Mammary epithelial cell (primary cell): ENCODE measurements at regions of chr6 and their contacts with region 1.

Region 1: GRCh38 chr6:152267967-152268845 is 369.0 kb downstream of the SYNE1 start:
- DNase-seq: no peak
- H3K4me3 ChIP-seq: no peak overlapping the region
- H3K27ac ChIP-seq: no peak overlapping the region
- H3K4me1 ChIP-seq: peaks cover 32% of the 10 kb centered on the region
- H3K27me3 ChIP-seq: no peaks in the 10 kb centered on the region
- CTCF ChIP-seq: peak; percentile 26 to 54

Region 2: DNA sequence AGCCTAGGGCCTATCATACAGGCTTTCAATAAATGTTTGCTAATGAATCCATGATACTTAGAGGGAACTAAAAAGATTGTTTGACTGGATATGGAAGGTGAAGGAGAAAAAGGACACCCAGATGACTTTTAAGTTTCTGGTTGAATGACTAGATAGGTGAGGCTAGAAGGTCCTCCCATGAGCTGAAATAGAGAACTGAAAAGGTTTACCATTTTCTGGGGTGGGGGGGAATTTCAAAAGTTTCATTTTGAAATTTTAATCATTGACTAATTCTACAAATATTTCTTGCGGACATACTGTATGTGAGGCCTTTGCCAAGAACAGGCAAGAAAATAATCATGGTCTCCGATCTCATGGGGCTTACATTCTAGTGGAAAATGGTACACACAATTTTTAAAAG is 858.9 kb before region 1 on chr6:
- CTCF ChIA-PET with region 1: no interaction called
- dilution Hi-C with region 1: no loop called
- in situ Hi-C with region 1: loop called in 1 of 2 experiments (anchors 25 kb)
- intact Hi-C with region 1: no loop called
- DNase-seq: no peak
- H3K4me3 ChIP-seq: no peak overlapping the region
- H3K27ac ChIP-seq: no peak overlapping the region
- H3K4me1 ChIP-seq: no peaks in the 10 kb centered on the region
- H3K27me3 ChIP-seq: no peaks in the 10 kb centered on the region
- CTCF ChIP-seq: no peak

Region 3: DNA sequence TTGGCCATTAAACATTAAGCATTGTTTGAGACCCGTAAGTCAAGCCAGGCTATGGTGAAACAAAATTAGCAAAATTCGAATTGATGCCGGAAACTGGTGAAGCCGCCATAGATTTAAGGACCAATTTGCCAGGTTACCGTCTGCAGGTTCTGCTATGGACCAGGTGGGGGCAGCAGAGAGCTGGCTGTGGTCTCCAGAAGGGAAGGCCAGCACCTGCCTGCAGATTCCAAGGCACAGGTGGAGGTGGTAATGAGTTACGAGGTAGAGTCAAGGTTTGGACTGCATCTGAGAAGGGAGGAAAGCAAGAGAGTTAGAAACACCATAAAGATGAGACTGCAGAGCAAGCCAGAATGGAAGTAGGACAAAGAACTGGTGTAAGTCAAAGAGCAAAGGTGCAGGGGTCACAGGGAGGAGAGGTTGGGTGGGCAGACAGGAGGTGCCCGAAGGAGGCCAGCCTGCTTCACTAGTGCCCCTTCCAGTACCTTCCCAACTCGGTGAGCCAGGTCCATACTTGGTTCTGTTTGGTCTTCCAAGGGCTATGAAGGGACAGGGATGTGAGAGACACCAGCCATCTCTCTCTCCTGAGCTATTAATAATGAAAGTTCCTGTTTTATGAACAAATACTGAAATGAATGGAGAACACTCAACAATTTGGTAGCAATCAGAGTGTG is 592.3 kb before region 1 on chr6:
- CTCF ChIA-PET with region 1: no interaction called
- dilution Hi-C with region 1: no loop called
- in situ Hi-C with region 1: loop called (anchors 10 to 25 kb)
- intact Hi-C with region 1: loop called (anchors 1 kb)
- DNase-seq: peak; percentile 38
- H3K4me3 ChIP-seq: no peak overlapping the region
- H3K27ac ChIP-seq: no peak overlapping the region
- H3K4me1 ChIP-seq: no peaks in the 10 kb centered on the region
- H3K27me3 ChIP-seq: no peaks in the 10 kb centered on the region
- CTCF ChIP-seq: peak; percentile 95 to 98

Region 4: DNA sequence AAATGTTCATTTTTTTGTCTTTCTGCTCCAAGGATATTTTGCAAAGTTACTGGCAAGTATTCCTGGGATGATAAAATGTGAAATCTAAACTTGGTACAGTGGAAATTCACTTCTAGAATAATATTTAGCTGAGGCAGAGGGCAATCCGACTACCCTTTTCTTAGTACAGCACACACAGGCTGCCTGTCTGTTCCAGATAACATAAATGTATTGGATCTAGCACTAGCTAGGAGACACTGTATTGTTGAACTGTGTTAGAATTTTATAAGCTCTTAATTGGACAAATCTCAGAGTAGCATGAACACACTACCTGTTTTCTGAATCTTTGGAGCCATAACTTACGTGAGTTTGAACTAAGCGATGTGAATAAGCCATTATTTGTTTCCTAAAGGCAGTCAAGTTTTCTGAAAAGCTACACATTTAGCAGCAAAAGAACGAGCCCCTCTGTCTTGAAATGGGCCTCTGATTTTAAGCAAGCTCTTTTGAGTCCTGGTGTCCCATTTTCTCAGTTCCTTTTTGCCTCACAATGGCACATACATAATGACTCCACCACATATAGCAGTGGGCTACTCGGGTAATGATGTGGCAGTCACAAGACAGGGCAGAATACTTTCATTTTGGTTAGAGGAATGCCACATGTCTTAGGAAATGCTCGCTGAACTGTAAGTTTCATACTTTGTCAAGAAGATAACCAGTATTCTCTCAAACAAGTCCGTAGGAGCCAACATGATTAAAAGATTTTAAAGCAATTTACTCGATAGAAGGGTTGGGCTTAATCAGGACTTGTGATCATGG is 577.2 kb before region 1 on chr6:
- CTCF ChIA-PET with region 1: no interaction called
- dilution Hi-C with region 1: no loop called
- in situ Hi-C with region 1: loop called (anchors 10 to 25 kb)
- intact Hi-C with region 1: loop called (anchors 5 kb)
- DNase-seq: peak; percentile 39
- H3K4me3 ChIP-seq: peak overlapping the region; percentile 23 to 29 (median 29)
- H3K27ac ChIP-seq: peak overlapping the region; percentile 2
- H3K4me1 ChIP-seq: peaks cover 12% of the 10 kb centered on the region
- H3K27me3 ChIP-seq: no peaks in the 10 kb centered on the region
- CTCF ChIP-seq: no peak

Region 5: DNA sequence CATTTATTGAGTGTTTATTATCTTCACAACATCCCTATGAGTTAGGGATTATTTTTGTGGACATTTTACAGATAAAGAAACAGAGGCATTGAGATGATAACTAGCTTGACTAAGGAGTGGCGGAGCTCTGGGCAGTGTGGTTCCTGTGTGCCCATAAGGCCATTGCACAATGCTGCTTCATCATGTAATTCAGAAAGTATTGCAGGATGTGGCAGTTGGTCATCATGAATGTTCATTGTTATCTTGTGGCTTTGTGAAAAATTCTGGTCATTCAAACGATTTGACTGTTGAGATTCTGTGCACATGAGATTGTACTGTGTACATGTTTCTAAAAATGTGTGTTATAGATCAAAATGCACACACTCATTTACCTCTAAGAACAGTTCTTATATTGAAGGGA is 309.9 kb before region 1 on chr6:
- CTCF ChIA-PET with region 1: interaction called, 3 read pairs
- dilution Hi-C with region 1: no loop called
- in situ Hi-C with region 1: no loop called
- intact Hi-C with region 1: loop called (anchors 1 kb)
- DNase-seq: peak; percentile 80
- H3K4me3 ChIP-seq: no peak overlapping the region
- H3K27ac ChIP-seq: peak overlapping the region; percentile 28
- H3K4me1 ChIP-seq: peaks cover 26% of the 10 kb centered on the region
- H3K27me3 ChIP-seq: no peaks in the 10 kb centered on the region
- CTCF ChIP-seq: no peak

Region 6: GRCh38 chr6:152124429-152125074 is 143.7 kb before region 1 on chr6:
- CTCF ChIA-PET with region 1: no interaction called
- dilution Hi-C with region 1: no loop called
- in situ Hi-C with region 1: no loop called
- intact Hi-C with region 1: loop called (anchors 10 kb)
- DNase-seq: peak; percentile 49
- H3K4me3 ChIP-seq: no peak overlapping the region
- H3K27ac ChIP-seq: no peak overlapping the region
- H3K4me1 ChIP-seq: peaks cover 23% of the 10 kb centered on the region
- H3K27me3 ChIP-seq: no peaks in the 10 kb centered on the region
- CTCF ChIP-seq: peak; percentile 85 to 88

Region 7: GRCh38 chr6:152225241-152225934 is 42.8 kb before region 1 on chr6:
- CTCF ChIA-PET with region 1: no interaction called
- dilution Hi-C with region 1: no loop called
- in situ Hi-C with region 1: no loop called
- intact Hi-C with region 1: no loop called
- DNase-seq: no peak
- H3K4me3 ChIP-seq: no peak overlapping the region
- H3K27ac ChIP-seq: no peak overlapping the region
- H3K4me1 ChIP-seq: no peaks in the 10 kb centered on the region
- H3K27me3 ChIP-seq: no peaks in the 10 kb centered on the region
- CTCF ChIP-seq: no peak

Region 8: DNA sequence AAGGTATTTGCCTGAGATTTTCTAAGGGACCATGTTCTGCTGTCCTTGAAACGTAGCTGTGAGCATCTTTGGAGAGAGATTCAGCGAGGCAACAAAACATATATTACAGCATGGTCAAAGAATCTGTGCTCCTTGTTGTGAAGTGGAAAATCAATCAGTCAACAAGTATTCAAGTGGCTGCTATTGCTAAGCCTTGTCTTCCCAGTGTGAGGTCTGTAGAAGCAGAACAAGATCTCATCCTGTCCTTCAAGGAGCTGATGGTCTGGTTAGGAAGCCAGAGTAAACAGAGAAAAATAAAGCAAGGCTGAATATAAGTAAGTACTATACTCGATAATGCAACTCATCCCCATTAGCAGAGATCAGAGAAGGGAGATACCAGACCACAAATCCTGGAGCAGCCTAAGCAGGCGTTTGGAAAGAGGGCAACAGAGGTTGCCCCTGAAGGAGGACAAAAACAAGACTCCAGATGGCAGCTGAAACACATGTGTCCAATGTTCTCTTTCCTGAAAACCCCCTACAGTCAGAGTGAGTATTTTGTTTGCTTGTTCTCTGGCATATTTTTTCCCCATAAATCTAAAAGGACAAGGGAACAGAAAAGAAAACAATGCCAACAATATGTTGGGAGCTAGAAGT is 23.1 kb before region 1 on chr6:
- CTCF ChIA-PET with region 1: no interaction called
- dilution Hi-C with region 1: no loop called
- in situ Hi-C with region 1: no loop called
- intact Hi-C with region 1: no loop called
- DNase-seq: no peak
- H3K4me3 ChIP-seq: no peak overlapping the region
- H3K27ac ChIP-seq: no peak overlapping the region
- H3K4me1 ChIP-seq: no peaks in the 10 kb centered on the region
- H3K27me3 ChIP-seq: no peaks in the 10 kb centered on the region
- CTCF ChIP-seq: no peak